ENCODE measurements at regions of chr1 and their contacts with region 1.

Region 1: DNA sequence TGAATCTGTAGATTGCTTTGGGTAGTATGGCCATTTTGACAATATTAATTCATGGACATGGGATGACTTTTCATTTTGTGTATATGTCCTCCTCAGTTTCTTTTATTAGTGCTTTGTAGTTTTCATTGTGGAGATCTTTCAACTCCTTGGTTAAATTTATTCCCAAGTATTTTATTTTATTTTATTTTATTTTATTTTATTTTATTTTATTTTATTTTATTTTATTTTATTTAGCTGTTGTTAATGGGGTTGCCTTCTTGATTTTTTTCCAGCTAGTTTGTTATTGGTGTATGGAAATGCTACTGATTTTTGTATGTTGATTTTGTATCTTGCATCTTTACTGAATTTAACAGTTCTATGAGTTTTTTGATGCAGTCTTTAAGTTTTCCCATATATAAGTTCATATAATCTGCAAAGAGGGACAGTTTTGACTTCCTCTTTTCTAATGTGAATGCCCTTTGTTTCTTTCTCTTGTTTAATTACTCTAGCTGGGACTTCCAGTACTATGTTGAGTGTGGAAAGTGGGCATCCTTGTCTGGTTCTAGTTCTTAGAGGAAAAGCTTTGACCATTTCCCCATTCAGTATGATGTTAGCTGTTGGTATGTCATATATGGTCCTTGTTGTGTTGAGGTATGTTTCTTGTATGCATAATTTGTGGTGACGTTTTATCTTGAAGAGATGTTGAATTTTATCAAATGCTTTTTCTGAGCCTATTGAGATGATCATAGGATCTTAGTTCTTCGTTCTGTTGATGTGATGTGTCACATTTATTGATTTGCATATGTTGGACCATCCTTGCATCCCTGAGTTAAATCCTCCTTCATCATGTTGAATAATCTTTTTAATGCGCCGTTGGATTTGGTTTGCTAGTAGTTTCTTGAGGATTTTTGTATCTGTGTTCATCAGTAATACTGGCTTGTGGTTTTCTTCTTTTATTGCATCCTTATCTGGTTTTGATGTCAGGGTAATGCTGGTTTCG is 14.3 kb downstream of the CEPT1 start:
- DNase-seq: peak; percentile 31
- ATAC-seq: no peak
- H3K4me3 ChIP-seq: no peak overlapping the region
- H3K4me3 Mint-ChIP-seq: peak overlapping the region; percentile 67
- H3K27ac ChIP-seq: peak overlapping the region in 1 of 2 donors; percentile 60
- H3K27ac Mint-ChIP-seq: peak overlapping the region; percentile 76
- H3K4me1 ChIP-seq: peaks cover 23 to 47% of the 10 kb centered on the region in 2 donors
- H3K4me1 Mint-ChIP-seq: peaks cover 71% of the 10 kb centered on the region
- H3K27me3 ChIP-seq: no peaks in the 10 kb centered on the region
- H3K27me3 Mint-ChIP-seq: no peaks in the 10 kb centered on the region
- CTCF ChIP-seq: no peak

Region 2: DNA sequence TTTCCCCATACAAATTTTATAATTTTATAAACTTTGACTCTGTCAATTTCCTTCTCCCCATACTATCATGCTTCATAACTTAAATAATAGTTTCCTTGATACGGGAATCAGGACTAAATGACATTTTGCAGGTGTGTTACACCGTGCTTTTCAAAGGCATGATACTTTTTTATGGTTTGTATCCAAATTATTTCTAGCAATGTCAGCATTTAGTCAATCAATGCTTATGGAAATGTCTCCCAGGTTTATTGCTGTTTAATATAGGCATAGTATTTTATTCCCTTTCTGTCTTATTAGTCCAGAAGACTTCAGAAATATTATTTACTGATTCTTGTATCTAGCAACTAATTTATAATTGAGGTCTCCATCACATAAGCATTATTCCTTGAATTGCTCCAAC is 37.8 kb before region 1 on chr1:
- CTCF ChIA-PET with region 1: no interaction called
- POLR2A ChIA-PET with region 1: no interaction called
- intact Hi-C with region 1: loop called (anchors 5 kb)
- DNase-seq: no peak
- ATAC-seq: no peak
- H3K4me3 ChIP-seq: no peak overlapping the region
- H3K4me3 Mint-ChIP-seq: no peak overlapping the region
- H3K27ac ChIP-seq: peak overlapping the region in 1 of 2 donors; percentile 47
- H3K27ac Mint-ChIP-seq: peak overlapping the region; percentile 26
- H3K4me1 ChIP-seq: no peaks in the 10 kb centered on the region
- H3K4me1 Mint-ChIP-seq: peaks cover 19% of the 10 kb centered on the region
- H3K27me3 ChIP-seq: no peaks in the 10 kb centered on the region
- H3K27me3 Mint-ChIP-seq: no peaks in the 10 kb centered on the region
- CTCF ChIP-seq: no peak

Region 3: GRCh38 chr1:111176678-111177077 is 22.4 kb after region 1 on chr1:
- CTCF ChIA-PET with region 1: no interaction called
- POLR2A ChIA-PET with region 1: no interaction called
- intact Hi-C with region 1: loop called (anchors 2 kb)
- DNase-seq: peak; percentile 34
- ATAC-seq: no peak
- H3K4me3 ChIP-seq: no peak overlapping the region
- H3K4me3 Mint-ChIP-seq: peak overlapping the region; percentile 13
- H3K27ac ChIP-seq: peak overlapping the region in 1 of 2 donors; percentile 43
- H3K27ac Mint-ChIP-seq: peak overlapping the region; percentile 32
- H3K4me1 ChIP-seq: peaks cover 9 to 28% of the 10 kb centered on the region in 2 donors
- H3K4me1 Mint-ChIP-seq: peaks cover 51% of the 10 kb centered on the region
- H3K27me3 ChIP-seq: no peaks in the 10 kb centered on the region
- H3K27me3 Mint-ChIP-seq: no peaks in the 10 kb centered on the region
- CTCF ChIP-seq: no peak

Region 4: GRCh38 chr1:111184663-111185062 is 30.4 kb after region 1 on chr1:
- CTCF ChIA-PET with region 1: no interaction called
- POLR2A ChIA-PET with region 1: no interaction called
- intact Hi-C with region 1: loop called (anchors 5 kb)
- DNase-seq: no peak
- ATAC-seq: no peak
- H3K4me3 ChIP-seq: no peak overlapping the region
- H3K4me3 Mint-ChIP-seq: no peak overlapping the region
- H3K27ac ChIP-seq: peak overlapping the region in 1 of 2 donors; percentile 44
- H3K27ac Mint-ChIP-seq: peak overlapping the region; percentile 76
- H3K4me1 ChIP-seq: peaks cover 13 to 19% of the 10 kb centered on the region in 2 donors
- H3K4me1 Mint-ChIP-seq: peaks cover 51% of the 10 kb centered on the region
- H3K27me3 ChIP-seq: no peaks in the 10 kb centered on the region
- H3K27me3 Mint-ChIP-seq: no peaks in the 10 kb centered on the region
- CTCF ChIP-seq: no peak

Region 5: GRCh38 chr1:111190651-111191451 is 36.5 kb after region 1 on chr1:
- CTCF ChIA-PET with region 1: no interaction called
- POLR2A ChIA-PET with region 1: interaction called, 11 read pairs
- intact Hi-C with region 1: loop called (anchors 5 kb)
- DNase-seq: no peak
- ATAC-seq: no peak
- H3K4me3 ChIP-seq: no peak overlapping the region
- H3K4me3 Mint-ChIP-seq: no peak overlapping the region
- H3K27ac ChIP-seq: peak overlapping the region in 1 of 2 donors; percentile 86
- H3K27ac Mint-ChIP-seq: peak overlapping the region; percentile 89
- H3K4me1 ChIP-seq: peaks cover 26 to 55% of the 10 kb centered on the region in 2 donors
- H3K4me1 Mint-ChIP-seq: peaks cover 66% of the 10 kb centered on the region
- H3K27me3 ChIP-seq: no peaks in the 10 kb centered on the region
- H3K27me3 Mint-ChIP-seq: no peaks in the 10 kb centered on the region
- CTCF ChIP-seq: no peak